ENCODE measurements at regions of chr13 and their contacts with region 1.

Region 1: GRCh38 chr13:48222358-48223301 is 10.4 kb upstream of the ITM2B start:
- DNase-seq: no peak
- ATAC-seq: peak; percentile 67
- H3K4me3 Mint-ChIP-seq: peak overlapping the region; percentile 39
- H3K27ac Mint-ChIP-seq: no peak overlapping the region
- H3K4me1 Mint-ChIP-seq: peaks cover 50% of the 10 kb centered on the region
- H3K27me3 Mint-ChIP-seq: no peaks in the 10 kb centered on the region

Region 2: GRCh38 chr13:48155848-48156247 is 66.8 kb before region 1 on chr13:
- CTCF ChIA-PET with region 1: no interaction called
- POLR2A ChIA-PET with region 1: no interaction called
- intact Hi-C with region 1: loop called (anchors 2 to 5 kb)
- DNase-seq: peak; percentile 26
- ATAC-seq: peak; percentile 78
- H3K4me3 Mint-ChIP-seq: peak overlapping the region; percentile 54
- H3K27ac Mint-ChIP-seq: peak overlapping the region; percentile 96
- H3K4me1 Mint-ChIP-seq: peaks cover 87% of the 10 kb centered on the region
- H3K27me3 Mint-ChIP-seq: no peaks in the 10 kb centered on the region

Region 3: DNA sequence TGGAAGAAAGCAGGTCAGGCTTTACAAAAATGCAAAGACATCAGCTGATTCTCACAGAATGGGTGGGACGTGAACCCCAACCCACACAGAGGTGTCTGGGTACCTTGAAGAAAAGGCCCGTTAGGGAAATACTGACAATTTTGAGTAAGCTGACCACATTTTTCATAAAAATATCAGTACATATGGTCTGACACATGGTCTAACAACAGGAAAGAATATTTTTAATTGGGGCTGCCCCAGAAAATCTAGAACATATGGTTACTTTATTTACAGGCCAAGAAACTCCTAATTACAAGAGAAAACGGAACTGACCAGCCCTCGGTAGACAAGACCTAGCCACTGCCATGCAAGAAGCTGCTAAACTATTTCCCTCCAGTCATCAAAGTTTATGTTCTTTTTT is 38.4 kb before region 1 on chr13:
- CTCF ChIA-PET with region 1: no interaction called
- POLR2A ChIA-PET with region 1: no interaction called
- intact Hi-C with region 1: loop called in 1 of 2 experiments (anchors 1 kb)
- DNase-seq: no peak
- ATAC-seq: no peak
- H3K4me3 Mint-ChIP-seq: no peak overlapping the region
- H3K27ac Mint-ChIP-seq: peak overlapping the region; percentile 9
- H3K4me1 Mint-ChIP-seq: peaks cover 59% of the 10 kb centered on the region
- H3K27me3 Mint-ChIP-seq: no peaks in the 10 kb centered on the region

Region 4: GRCh38 chr13:48210178-48210577 is 12.5 kb before region 1 on chr13:
- CTCF ChIA-PET with region 1: interaction called, 7 read pairs
- POLR2A ChIA-PET with region 1: interaction called, 3 read pairs
- intact Hi-C with region 1: loop called (anchors 1 kb)
- DNase-seq: no peak
- ATAC-seq: peak; percentile 96
- H3K4me3 Mint-ChIP-seq: no peak overlapping the region
- H3K27ac Mint-ChIP-seq: no peak overlapping the region
- H3K4me1 Mint-ChIP-seq: peaks cover 24% of the 10 kb centered on the region
- H3K27me3 Mint-ChIP-seq: peaks cover 13% of the 10 kb centered on the region

Region 5: GRCh38 chr13:48244159-48244558 is 21.5 kb after region 1 on chr13:
- CTCF ChIA-PET with region 1: no interaction called
- POLR2A ChIA-PET with region 1: no interaction called
- intact Hi-C with region 1: no loop called
- DNase-seq: no peak
- ATAC-seq: no peak
- H3K4me3 Mint-ChIP-seq: no peak overlapping the region
- H3K27ac Mint-ChIP-seq: no peak overlapping the region
- H3K4me1 Mint-ChIP-seq: peaks cover 65% of the 10 kb centered on the region
- H3K27me3 Mint-ChIP-seq: no peaks in the 10 kb centered on the region

Region 6: DNA sequence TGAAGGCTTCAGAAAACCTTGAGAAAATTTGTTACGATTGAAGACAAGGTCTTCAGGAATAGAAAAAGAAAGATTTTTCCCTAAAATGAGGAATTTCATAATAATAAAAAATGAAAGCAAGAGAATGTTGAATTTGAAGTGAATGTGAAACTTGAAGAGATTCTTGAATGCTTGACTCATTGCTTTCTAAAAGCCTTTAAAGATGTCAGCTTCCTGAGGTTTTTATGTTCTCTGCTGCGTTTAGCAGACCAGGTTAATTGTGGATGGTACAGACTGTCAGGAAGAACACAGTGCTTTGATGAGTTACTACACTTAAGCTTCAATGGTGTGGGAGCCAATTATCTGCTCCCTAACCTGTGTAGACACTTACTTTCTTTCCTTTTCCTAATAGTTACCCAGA is 656.8 kb after region 1 on chr13:
- CTCF ChIA-PET with region 1: no interaction called
- POLR2A ChIA-PET with region 1: interaction called, 7 read pairs
- intact Hi-C with region 1: loop called in 1 of 2 experiments (anchors 5 kb)
- DNase-seq: no peak
- ATAC-seq: no peak
- H3K4me3 Mint-ChIP-seq: no peak overlapping the region
- H3K27ac Mint-ChIP-seq: no peak overlapping the region
- H3K4me1 Mint-ChIP-seq: peaks cover 46% of the 10 kb centered on the region
- H3K27me3 Mint-ChIP-seq: peaks cover 6% of the 10 kb centered on the region

Region 7: GRCh38 chr13:48923376-48923775 is 700.7 kb after region 1 on chr13:
- CTCF ChIA-PET with region 1: no interaction called
- POLR2A ChIA-PET with region 1: no interaction called
- intact Hi-C with region 1: no loop called
- DNase-seq: no peak
- ATAC-seq: no peak
- H3K4me3 Mint-ChIP-seq: no peak overlapping the region
- H3K27ac Mint-ChIP-seq: no peak overlapping the region
- H3K4me1 Mint-ChIP-seq: no peaks in the 10 kb centered on the region
- H3K27me3 Mint-ChIP-seq: peaks cover 3% of the 10 kb centered on the region